Activated CD4-positive, alpha-beta memory T cell treated with anti-CD3 and anti-CD28 coated beads for 36 hours (primary cell): ENCODE measurements at regions of chr9 and their contacts with region 1.

Region 1: DNA sequence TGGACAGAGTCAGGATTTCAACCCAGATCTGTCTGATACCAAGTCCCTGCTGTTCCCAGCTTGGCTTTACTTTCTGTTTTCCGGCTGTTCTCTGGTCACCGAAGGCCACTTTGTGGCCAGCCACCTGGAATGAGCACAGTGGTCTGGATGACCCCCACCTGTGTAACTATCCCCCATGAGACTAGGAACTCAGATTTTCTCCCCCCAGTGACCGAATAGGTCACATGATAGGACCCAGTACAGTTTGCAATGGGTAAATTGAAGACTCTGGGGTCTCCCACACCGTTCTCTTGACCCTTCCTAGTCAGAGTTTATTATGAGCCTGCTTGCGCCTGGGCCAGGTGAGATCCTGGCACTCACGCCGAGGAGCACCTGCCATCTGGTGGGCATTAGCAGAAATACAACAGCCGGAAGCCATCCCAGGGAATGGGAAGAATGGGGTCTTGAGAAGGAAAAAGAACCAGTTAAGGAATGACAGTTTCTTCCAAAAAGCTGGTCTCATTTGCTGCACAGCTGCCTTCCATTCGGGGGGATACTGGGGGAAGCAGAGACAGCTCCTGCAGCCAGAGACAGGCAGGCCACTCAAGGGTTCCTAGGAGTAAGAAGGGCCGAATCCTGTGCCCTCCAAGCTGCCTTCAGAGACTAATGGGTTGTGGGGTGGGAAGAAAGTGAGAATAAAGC is 7.1 kb downstream of the PHYHD1 start:
- DNase-seq: peak; percentile 65
- H3K4me3 Mint-ChIP-seq: no peak overlapping the region
- H3K27ac Mint-ChIP-seq: no peak overlapping the region
- H3K4me1 Mint-ChIP-seq: peaks cover 9% of the 10 kb centered on the region
- H3K27me3 Mint-ChIP-seq: no peaks in the 10 kb centered on the region

Region 2: GRCh38 chr9:128643519-128644300 is 284.2 kb before region 1 on chr9:
- CTCF ChIA-PET with region 1: interaction called, 4 read pairs
- POLR2A ChIA-PET with region 1: no interaction called
- intact Hi-C with region 1: loop called (anchors 5 kb)
- DNase-seq: no peak
- H3K4me3 Mint-ChIP-seq: no peak overlapping the region
- H3K27ac Mint-ChIP-seq: no peak overlapping the region
- H3K4me1 Mint-ChIP-seq: no peaks in the 10 kb centered on the region
- H3K27me3 Mint-ChIP-seq: no peaks in the 10 kb centered on the region

Region 3: DNA sequence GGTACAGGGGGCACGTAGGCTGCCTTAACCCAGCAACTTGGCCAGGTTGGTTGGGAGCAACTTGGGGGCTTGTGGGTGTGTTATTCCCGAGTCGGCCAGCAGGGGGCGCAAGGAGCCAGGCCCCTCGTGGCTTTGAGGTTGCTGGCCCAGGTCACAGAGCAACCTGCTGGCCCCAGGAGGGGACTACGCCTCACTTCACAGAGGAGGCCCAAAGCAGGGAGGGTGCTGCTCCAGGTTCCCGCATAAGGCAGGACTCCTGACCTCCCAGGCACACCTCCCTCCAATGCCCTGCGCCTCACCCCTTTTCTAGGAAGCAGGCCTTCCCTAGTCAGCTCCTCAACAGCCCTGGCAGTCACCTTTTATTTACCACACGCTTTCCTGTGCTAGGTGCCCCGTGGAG is 64.2 kb before region 1 on chr9:
- CTCF ChIA-PET with region 1: interaction called, 184 read pairs
- POLR2A ChIA-PET with region 1: no interaction called
- intact Hi-C with region 1: loop called (anchors 1 kb)
- DNase-seq: peak; percentile 91
- H3K4me3 Mint-ChIP-seq: no peak overlapping the region
- H3K27ac Mint-ChIP-seq: no peak overlapping the region
- H3K4me1 Mint-ChIP-seq: peaks cover 6% of the 10 kb centered on the region
- H3K27me3 Mint-ChIP-seq: no peaks in the 10 kb centered on the region

Region 4: DNA sequence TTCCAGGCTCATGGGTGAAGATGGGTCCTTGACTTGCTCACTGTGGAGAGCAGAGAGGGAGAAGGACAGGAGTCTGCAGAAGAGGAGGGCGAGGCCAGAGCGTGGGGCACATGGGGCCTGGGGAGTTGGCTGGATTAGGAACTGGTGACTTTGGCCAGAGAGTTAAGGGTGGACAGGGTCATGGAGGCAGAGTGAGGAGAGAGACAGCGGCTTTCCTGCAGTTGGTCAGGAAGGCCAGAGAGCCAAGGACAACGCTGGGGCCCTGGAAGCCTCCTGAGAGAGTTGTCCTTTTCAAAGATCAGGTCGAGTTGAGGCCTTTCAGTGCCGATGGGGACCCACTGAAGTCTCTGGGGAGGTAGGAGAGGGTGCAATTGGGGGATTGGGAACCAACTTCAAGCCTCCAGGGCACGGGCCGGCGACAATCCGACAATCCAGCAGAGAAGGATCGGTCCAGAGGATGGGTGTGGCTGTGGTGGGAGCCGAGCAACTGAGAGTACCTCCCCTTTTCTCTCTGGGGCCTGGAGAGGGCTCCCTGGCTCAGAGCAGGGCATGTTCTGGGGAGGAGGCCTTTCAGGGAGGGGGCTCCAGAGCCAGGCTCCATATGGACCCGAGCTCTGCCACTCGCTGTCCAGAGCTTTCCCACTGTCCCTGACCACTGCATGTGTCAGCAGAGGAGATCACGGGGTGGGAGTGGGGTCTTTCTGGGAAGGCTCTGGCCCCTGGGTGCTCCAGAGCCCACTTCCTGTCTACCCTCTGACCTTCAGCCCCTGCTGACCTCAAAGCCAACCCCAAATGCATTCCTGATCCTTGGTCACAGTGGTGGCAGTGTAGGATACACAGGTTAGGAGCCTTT is 14.6 kb before region 1 on chr9:
- CTCF ChIA-PET with region 1: interaction called, 10 read pairs
- POLR2A ChIA-PET with region 1: no interaction called
- intact Hi-C with region 1: no loop called
- DNase-seq: no peak
- H3K4me3 Mint-ChIP-seq: no peak overlapping the region
- H3K27ac Mint-ChIP-seq: peak overlapping the region; percentile 75
- H3K4me1 Mint-ChIP-seq: peaks cover 39% of the 10 kb centered on the region
- H3K27me3 Mint-ChIP-seq: no peaks in the 10 kb centered on the region